Dendritic cell treated with granulocyte-macrophage colony-stimulating factor and Interleukin-4, amounts not matched to agents 40 ng/mL and 50 ng/mL, for 4 days (primary cell): ENCODE measurements at regions of chr7 and their contacts with region 1.

Region 1: DNA sequence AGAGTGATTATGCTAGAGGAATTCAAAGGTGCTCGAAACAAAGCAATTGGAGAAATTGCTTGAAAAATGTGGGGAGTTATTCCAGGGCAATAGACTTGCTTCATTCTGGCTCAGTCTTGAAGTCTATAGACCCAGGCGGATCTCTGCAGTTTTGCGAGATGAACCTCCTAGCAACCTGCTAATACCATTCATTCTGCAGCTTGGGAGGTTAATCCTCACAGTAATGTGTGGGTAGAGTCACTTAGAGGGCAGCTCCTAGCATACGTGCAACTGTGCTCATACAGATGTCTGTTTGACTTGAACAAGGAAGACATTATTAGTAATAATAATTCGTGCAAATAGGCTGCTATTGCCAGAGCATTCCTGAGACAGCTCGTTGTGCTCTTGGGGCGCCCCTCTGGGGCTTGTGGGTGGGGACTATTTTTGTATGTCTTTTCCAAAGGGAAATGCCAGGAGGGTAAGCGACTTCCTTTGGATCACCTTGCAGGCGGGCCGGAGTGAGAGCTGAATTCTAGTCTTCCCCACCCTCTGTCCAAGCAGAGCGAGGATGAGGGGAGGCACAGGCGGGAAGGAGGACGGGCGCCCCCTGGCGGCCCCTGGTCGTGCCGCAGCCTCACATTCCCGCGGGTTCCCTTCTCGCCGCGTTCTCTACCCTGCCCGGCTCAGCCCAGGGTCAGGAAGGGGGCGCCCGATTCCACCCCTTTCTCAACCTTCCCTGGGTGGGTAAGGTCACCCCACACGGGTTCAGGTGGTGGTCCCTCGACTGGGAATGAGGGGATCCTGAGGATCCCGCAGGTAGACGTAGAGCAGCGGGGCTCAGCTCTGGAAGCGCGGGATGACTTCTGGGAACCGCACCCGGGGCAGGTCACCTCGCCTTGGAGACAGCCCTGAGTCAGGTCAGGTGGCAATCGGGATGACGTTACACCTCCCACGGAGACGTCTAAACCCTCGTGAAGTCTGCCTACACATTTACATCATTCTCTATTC is 241.5 kb downstream of the PHTF2 start:
- H3K4me3 Mint-ChIP-seq: no peak overlapping the region
- H3K27ac Mint-ChIP-seq: no peak overlapping the region
- H3K4me1 Mint-ChIP-seq: peaks cover 8% of the 10 kb centered on the region
- H3K27me3 Mint-ChIP-seq: peaks cover 19% of the 10 kb centered on the region

Region 2: DNA sequence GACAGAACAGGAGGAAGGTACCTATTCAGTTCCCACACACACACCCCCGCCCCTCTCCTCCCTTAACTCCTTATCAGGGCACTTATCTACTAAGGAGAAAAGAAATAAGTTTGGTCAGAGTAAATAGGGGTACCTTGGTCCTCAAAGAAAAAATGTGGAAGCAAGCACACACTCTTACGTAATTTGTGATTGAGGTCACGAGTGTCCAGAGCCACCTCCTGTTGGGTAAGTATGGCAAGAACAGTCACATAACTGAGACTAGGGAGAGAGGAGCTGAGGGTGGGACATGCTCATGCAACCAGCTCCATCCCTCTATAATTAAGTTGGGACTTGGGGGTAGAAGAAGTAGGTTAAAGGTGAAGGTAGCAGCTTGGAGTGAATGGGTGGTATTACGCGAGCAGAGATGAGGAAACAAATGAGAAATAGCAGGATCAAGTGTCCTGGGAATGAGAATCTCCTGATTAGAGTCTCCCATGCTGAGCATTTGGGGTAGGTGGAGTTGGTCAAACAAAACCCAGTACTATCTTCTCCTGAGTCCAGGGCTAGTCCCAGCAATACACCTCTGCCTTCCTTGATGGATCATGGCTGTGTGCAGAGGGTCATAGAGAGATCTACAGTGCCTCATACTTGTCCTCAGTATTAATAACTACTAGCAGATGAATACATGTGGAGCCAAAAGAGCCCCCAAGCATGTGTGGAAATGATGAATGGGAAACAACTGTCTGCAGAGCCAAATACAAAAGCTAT is 701.0 kb before region 1 on chr7:
- intact Hi-C with region 1: no loop called
- H3K4me3 Mint-ChIP-seq: no peak overlapping the region
- H3K27ac Mint-ChIP-seq: peak overlapping the region; percentile 11
- H3K4me1 Mint-ChIP-seq: peaks cover 17% of the 10 kb centered on the region
- H3K27me3 Mint-ChIP-seq: no peaks in the 10 kb centered on the region

Region 3: DNA sequence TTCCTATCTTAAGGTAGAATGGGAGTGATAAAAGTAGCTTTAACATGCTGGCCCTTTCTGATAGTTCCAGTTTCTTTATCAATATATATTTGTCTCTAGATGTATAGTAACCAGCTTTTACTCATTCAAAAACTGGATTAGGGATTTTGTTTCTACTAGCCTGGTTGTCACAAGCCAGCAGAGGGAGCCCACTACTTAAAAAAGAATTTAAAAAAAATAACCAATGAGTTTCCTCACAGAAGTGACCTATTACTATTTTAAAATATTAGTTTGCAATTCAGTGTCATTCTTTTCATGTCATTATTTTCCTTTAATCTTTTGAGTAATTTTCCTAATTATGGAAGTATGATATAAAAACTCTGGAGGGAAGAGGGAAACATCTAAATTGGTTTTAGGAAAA is 99.4 kb before region 1 on chr7:
- intact Hi-C with region 1: loop called (anchors 5 kb)
- H3K4me3 Mint-ChIP-seq: no peak overlapping the region
- H3K27ac Mint-ChIP-seq: no peak overlapping the region
- H3K4me1 Mint-ChIP-seq: no peaks in the 10 kb centered on the region
- H3K27me3 Mint-ChIP-seq: no peaks in the 10 kb centered on the region

Region 4: DNA sequence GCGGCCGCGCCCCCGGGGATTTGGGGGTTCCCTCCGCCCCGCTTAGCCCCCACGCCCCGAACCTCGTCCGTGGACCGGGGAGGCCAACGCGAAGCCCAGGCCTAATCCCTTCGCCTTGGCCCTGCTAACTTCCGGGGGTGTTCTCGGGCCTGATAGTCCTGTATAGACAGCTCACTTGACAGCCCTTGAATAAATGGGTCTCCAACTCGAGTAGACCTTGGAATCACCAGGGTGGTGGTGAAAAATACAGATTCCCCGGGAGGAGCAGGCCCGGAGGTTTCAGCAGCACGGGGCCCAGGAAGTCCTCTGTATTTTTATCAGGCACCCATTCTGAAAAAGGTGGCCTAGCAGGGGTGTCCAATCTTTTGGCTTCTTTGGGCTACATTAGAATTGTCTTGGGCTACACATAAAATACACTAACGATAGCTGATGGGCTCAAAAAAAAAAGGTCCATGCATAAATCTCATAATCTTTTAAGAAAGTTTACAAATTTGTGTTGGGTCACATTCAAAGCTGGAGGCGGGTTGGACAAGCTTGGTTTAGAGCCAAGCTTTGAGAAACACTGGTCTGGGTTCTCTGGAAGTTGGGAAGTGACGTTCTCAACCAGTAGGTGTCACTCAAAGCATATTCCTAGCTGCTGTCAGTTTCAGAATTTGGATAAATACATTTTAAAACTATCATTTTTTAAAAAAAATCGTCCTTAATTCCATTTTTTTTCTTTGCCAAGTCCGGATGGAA is 19.8 kb before region 1 on chr7:
- intact Hi-C with region 1: loop called (anchors 1 kb)
- H3K4me3 Mint-ChIP-seq: peak overlapping the region; percentile 80
- H3K27ac Mint-ChIP-seq: peak overlapping the region; percentile 83
- H3K4me1 Mint-ChIP-seq: peaks cover 27% of the 10 kb centered on the region
- H3K27me3 Mint-ChIP-seq: peaks cover 13% of the 10 kb centered on the region